CD4-positive, alpha-beta memory T cell (primary cell): ENCODE measurements at regions of chr5 and their contacts with region 1.

Region 1: GRCh38 chr5:57137401-57137800 is 36.5 kb upstream of the GPBP1 start:
- DNase-seq: no peak
- H3K4me3 ChIP-seq: no peak overlapping the region
- H3K4me3 Mint-ChIP-seq: no peak overlapping the region
- H3K27ac ChIP-seq: no peak overlapping the region
- H3K27ac Mint-ChIP-seq: no peak overlapping the region
- H3K4me1 ChIP-seq: no peaks in the 10 kb centered on the region
- H3K4me1 Mint-ChIP-seq: peaks cover 0 to 2% (median under 1%) of the 10 kb centered on the region in 4 donors
- H3K27me3 ChIP-seq: no peaks in the 10 kb centered on the region
- H3K27me3 Mint-ChIP-seq: peaks cover 3 to 5% of the 10 kb centered on the region in 2 donors

Region 2: GRCh38 chr5:56264417-56265025 is 872.9 kb before region 1 on chr5:
- CTCF ChIA-PET with region 1: interaction called, 38 read pairs
- POLR2A ChIA-PET with region 1: no interaction called
- intact Hi-C with region 1: loop called (anchors 1 kb)
- DNase-seq: peak; percentile 9 to 36 (median 21)
- H3K4me3 ChIP-seq: no peak overlapping the region
- H3K4me3 Mint-ChIP-seq: no peak overlapping the region
- H3K27ac ChIP-seq: no peak overlapping the region
- H3K27ac Mint-ChIP-seq: peak overlapping the region in 1 of 7 donors; percentile 3
- H3K4me1 ChIP-seq: no peaks in the 10 kb centered on the region
- H3K4me1 Mint-ChIP-seq: peaks cover 0 to 4% (median 1%) of the 10 kb centered on the region in 4 donors
- H3K27me3 ChIP-seq: no peaks in the 10 kb centered on the region
- H3K27me3 Mint-ChIP-seq: no peaks in the 10 kb centered on the region

Region 3: GRCh38 chr5:56909294-56910209 is 227.8 kb before region 1 on chr5 and contains the start of gene SETD9:
- CTCF ChIA-PET with region 1: interaction called, 143 read pairs
- POLR2A ChIA-PET with region 1: interaction called, 3 read pairs
- intact Hi-C with region 1: no loop called
- DNase-seq: peak; percentile 76 to 83 (median 81)
- H3K4me3 ChIP-seq: peak within 1 kb of the TSS; percentile 88 to 97
- H3K4me3 Mint-ChIP-seq: peak within 1 kb of the TSS; percentile 89 to 98 (median 92)
- H3K27ac ChIP-seq: peak within 1 kb of the TSS; percentile 62
- H3K27ac Mint-ChIP-seq: peak within 1 kb of the TSS; percentile 65 to 95 (median 92)
- H3K4me1 ChIP-seq: peaks cover 15% of the 10 kb centered on the region
- H3K4me1 Mint-ChIP-seq: peaks cover 15 to 25% (median 17%) of the 10 kb centered on the region in 4 donors
- H3K27me3 ChIP-seq: no peaks in the 10 kb centered on the region
- H3K27me3 Mint-ChIP-seq: no peaks in the 10 kb centered on the region
- total RNA-seq, gene SETD9: 3.8 to 6.8 TPM

Region 4: GRCh38 chr5:56993241-56993640 is 144.2 kb before region 1 on chr5:
- CTCF ChIA-PET with region 1: interaction called, 27 read pairs
- POLR2A ChIA-PET with region 1: no interaction called
- intact Hi-C with region 1: loop called (anchors 1 kb)
- DNase-seq: no peak
- H3K4me3 ChIP-seq: no peak overlapping the region
- H3K4me3 Mint-ChIP-seq: no peak overlapping the region
- H3K27ac ChIP-seq: no peak overlapping the region
- H3K27ac Mint-ChIP-seq: no peak overlapping the region
- H3K4me1 ChIP-seq: no peaks in the 10 kb centered on the region
- H3K4me1 Mint-ChIP-seq: no peaks in the 10 kb centered on the region
- H3K27me3 ChIP-seq: no peaks in the 10 kb centered on the region
- H3K27me3 Mint-ChIP-seq: peaks cover 1 to 2% of the 10 kb centered on the region in 2 donors

Region 5: GRCh38 chr5:57173185-57174127 is 36.1 kb after region 1 on chr5 and contains the start of gene GPBP1:
- CTCF ChIA-PET with region 1: interaction called, 11 read pairs
- POLR2A ChIA-PET with region 1: interaction called, 5 read pairs
- intact Hi-C with region 1: loop called (anchors 1 kb)
- DNase-seq: peak; percentile 98 to 99 (median 99)
- H3K4me3 ChIP-seq: peak within 1 kb of the TSS; percentile 70 to 87
- H3K4me3 Mint-ChIP-seq: peak within 1 kb of the TSS; percentile 96 to 99 (median 98)
- H3K27ac ChIP-seq: peak within 1 kb of the TSS; percentile 99
- H3K27ac Mint-ChIP-seq: peak within 1 kb of the TSS; percentile 98 to 100 (median 99)
- H3K4me1 ChIP-seq: peaks cover 37% of the 10 kb centered on the region
- H3K4me1 Mint-ChIP-seq: peaks cover 14 to 53% (median 25%) of the 10 kb centered on the region in 4 donors
- H3K27me3 ChIP-seq: no peaks in the 10 kb centered on the region
- H3K27me3 Mint-ChIP-seq: no peaks in the 10 kb centered on the region
- total RNA-seq, gene GPBP1: 136 to 137 TPM

Region 6: GRCh38 chr5:57482671-57483106 is 345.3 kb after region 1 on chr5 and contains the start of gene ACTBL2:
- CTCF ChIA-PET with region 1: no interaction called
- POLR2A ChIA-PET with region 1: no interaction called
- intact Hi-C with region 1: no loop called
- DNase-seq: no peak
- H3K4me3 ChIP-seq: no peak within 1 kb of the TSS
- H3K4me3 Mint-ChIP-seq: no peak within 1 kb of the TSS
- H3K27ac ChIP-seq: no peak within 1 kb of the TSS
- H3K27ac Mint-ChIP-seq: no peak within 1 kb of the TSS
- H3K4me1 ChIP-seq: no peaks in the 10 kb centered on the region
- H3K4me1 Mint-ChIP-seq: no peaks in the 10 kb centered on the region
- H3K27me3 ChIP-seq: peaks cover 4% of the 10 kb centered on the region
- H3K27me3 Mint-ChIP-seq: peaks cover 6% of the 10 kb centered on the region in 2 donors
- total RNA-seq, gene ACTBL2: not detected